Psoas muscle (tissue), 8 donors: ENCODE measurements at regions of chr10 and their contacts with region 1.

Region 1: GRCh38 chr10:43324876-43325275 is 46.6 kb upstream of the FXYD4 start:
- DNase-seq: no peak
- ATAC-seq: no peak
- H3K4me3 ChIP-seq: no peak overlapping the region
- H3K27ac ChIP-seq: no peak overlapping the region
- H3K4me1 ChIP-seq: no peaks in the 10 kb centered on the region
- H3K27me3 ChIP-seq: peaks cover 0 to 5% (median 0%) of the 10 kb centered on the region in 3 donors
- CTCF ChIP-seq: no peak

Region 2: GRCh38 chr10:43361986-43362839 is 37.3 kb after region 1 on chr10:
- intact Hi-C with region 1: loop called in 1 of 2 experiments (anchors 1 kb)
- DNase-seq: peak; percentile 92 to 94
- ATAC-seq: peak; percentile 85 to 94 (median 90)
- H3K4me3 ChIP-seq: peak overlapping the region; percentile 71
- H3K27ac ChIP-seq: peak overlapping the region; percentile 9
- H3K4me1 ChIP-seq: no peaks in the 10 kb centered on the region
- H3K27me3 ChIP-seq: no peaks in the 10 kb centered on the region
- CTCF ChIP-seq: peak; percentile 36

Region 3: GRCh38 chr10:43627942-43628341 is 303.1 kb after region 1 on chr10:
- intact Hi-C with region 1: no loop called
- DNase-seq: no peak
- ATAC-seq: no peak
- H3K4me3 ChIP-seq: no peak overlapping the region
- H3K27ac ChIP-seq: no peak overlapping the region
- H3K4me1 ChIP-seq: no peaks in the 10 kb centered on the region
- H3K27me3 ChIP-seq: no peaks in the 10 kb centered on the region
- CTCF ChIP-seq: no peak